Naive thymus-derived CD4-positive, alpha-beta T cell (primary cell): ENCODE measurements at regions of chr14 and their contacts with region 1.

Region 1: DNA sequence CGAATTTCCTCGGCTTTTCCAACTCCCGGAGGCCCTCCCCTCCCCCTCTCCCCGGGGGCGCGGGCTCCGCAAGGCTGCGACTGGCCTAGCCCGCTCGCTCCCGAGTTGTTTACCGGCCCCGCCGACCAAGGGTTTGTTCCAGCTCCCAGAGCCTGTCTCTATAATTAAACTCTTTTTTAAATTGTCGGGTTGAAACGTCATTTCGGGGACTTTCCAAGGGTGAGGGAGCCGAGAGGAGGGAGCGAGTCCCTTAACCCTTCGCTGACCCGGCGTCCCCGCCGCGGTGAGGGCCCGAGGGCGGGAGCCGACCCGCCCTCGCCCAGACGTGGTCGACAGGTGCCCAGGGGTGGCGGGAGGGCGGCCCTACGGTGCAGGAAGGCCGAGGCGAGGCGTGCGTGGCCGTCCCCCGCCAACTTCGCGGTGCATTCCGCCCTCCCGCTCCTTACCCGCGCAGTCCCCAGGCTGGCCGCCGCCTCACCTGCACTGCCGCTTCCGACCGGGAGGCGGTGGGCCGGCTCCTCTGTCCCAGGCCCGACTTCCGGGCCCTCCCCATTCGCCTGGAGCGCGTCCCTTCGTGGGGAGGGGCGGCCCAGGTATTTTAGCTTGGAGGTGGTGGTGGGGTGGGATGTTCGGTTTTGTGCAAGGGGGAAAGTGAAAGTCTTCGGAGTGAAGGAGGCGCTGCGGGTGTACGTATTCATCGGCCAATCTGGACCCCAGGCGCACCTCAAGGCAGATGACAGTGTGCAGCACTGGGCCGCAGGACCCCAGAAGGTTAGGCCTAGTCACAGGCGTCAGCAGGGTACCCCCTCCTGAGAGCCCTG is 2.9 kb upstream of the ZFP36L1 start:
- DNase-seq: peak; percentile 77 to 92 (median 86)
- ATAC-seq: peak; percentile 56
- H3K4me3 ChIP-seq: peak overlapping the region; percentile 91
- H3K4me3 Mint-ChIP-seq: peak overlapping the region; percentile 92 to 99 (median 95)
- H3K27ac ChIP-seq: peak overlapping the region; percentile 100
- H3K27ac Mint-ChIP-seq: peak overlapping the region; percentile 91 to 100 (median 98)
- H3K4me1 ChIP-seq: peaks cover 11 to 18% of the 10 kb centered on the region in 2 donors
- H3K4me1 Mint-ChIP-seq: peaks cover 9 to 37% (median 31%) of the 10 kb centered on the region in 7 donors
- H3K27me3 ChIP-seq: no peaks in the 10 kb centered on the region
- H3K27me3 Mint-ChIP-seq: peaks cover 0 to 4% (median 0%) of the 10 kb centered on the region in 5 donors

Region 2: DNA sequence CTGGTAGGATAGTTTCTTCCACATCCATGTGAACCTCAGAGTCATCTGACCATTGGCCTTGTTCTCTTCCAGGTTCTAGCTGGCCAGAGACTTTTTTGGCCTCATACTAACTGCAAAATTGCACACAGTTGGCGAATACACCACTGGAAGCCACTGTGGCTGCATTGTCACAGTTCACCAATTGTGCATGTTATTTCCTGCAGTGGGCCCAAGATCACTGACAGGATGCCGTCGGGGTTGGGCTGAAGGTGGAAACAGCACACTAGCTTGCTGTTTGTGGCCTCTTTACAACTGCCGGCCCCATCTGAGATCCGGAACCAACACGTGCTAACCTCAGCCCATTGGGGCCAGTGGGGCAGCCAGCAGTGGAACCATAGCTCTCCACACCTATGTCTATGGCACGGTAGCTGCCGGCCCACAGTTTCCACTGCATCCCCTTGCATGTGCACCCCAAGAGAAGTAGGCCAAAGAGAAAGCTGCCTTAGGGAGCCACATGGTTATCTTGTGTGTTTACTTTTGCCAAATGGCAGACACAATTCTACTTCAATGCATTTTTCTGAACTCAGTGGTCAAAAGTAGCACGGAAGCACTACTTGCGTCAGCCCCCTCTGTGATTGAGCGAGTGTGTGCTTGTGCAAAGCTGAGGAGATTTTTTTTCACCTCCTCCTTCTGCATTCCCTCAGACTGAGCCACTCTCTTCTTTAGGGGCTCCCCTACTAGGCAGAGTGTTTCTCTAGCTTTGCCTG is 512.3 kb before region 1 on chr14:
- CTCF ChIA-PET with region 1: interaction called, 26 read pairs
- POLR2A ChIA-PET with region 1: interaction called, 180 read pairs
- intact Hi-C with region 1: no loop called
- DNase-seq: peak; percentile 20 to 70 (median 62)
- ATAC-seq: peak; percentile 78
- H3K4me3 ChIP-seq: peak overlapping the region; percentile 14
- H3K4me3 Mint-ChIP-seq: peak overlapping the region; percentile 44 to 86 (median 72)
- H3K27ac ChIP-seq: peak overlapping the region; percentile 74
- H3K27ac Mint-ChIP-seq: peak overlapping the region; percentile 93 to 99 (median 97)
- H3K4me1 ChIP-seq: peaks cover 36 to 70% of the 10 kb centered on the region in 2 donors
- H3K4me1 Mint-ChIP-seq: peaks cover 44 to 96% (median 86%) of the 10 kb centered on the region in 7 donors
- H3K27me3 ChIP-seq: no peaks in the 10 kb centered on the region
- H3K27me3 Mint-ChIP-seq: no peaks in the 10 kb centered on the region

Region 3: DNA sequence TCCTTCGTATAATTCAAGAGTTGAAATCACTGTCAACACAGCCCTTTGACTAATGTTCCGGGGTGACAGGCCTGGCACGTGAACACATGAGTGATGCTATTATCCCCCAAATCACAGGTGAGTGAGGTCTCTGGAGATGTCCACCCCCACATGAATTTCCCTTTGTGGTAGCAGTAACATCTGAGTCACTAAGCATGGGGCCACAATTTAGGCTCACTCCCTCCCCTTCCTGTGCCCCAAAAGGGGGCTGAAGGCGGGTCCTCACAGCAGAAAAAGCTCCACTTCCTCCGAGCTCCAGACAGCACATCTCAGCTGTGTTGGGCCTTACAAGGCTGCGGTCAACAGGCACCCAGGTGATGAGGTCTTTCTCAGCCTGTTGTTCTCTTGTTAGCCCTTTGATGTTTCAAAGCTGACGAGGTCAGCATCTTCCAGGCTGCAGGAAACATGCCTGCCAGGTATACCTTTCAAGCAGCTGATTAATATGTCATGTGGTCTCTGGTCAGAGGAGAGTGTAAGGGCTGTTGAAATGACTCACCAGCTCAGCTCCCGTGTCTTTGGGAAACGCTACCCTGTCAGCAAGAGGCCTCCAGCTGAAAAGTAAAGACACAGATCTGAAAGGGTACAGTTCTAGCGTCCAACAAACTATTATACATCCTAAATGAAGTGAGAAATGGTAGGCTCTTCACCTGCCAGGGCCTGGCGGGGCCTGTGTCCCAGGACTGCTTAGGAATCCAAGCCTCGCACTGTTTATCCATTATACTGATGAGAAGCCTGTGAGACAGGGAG is 110.2 kb before region 1 on chr14:
- CTCF ChIA-PET with region 1: no interaction called
- POLR2A ChIA-PET with region 1: interaction called, 36 read pairs
- intact Hi-C with region 1: no loop called
- DNase-seq: peak; percentile 31 to 74 (median 64)
- ATAC-seq: peak; percentile 91
- H3K4me3 ChIP-seq: no peak overlapping the region
- H3K4me3 Mint-ChIP-seq: peak overlapping the region; percentile 3 to 74 (median 48)
- H3K27ac ChIP-seq: peak overlapping the region; percentile 25
- H3K27ac Mint-ChIP-seq: peak overlapping the region; percentile 74 to 97 (median 91)
- H3K4me1 ChIP-seq: peaks cover 44 to 53% of the 10 kb centered on the region in 2 donors
- H3K4me1 Mint-ChIP-seq: peaks cover 52 to 74% (median 59%) of the 10 kb centered on the region in 7 donors
- H3K27me3 ChIP-seq: no peaks in the 10 kb centered on the region
- H3K27me3 Mint-ChIP-seq: no peaks in the 10 kb centered on the region

Region 4: DNA sequence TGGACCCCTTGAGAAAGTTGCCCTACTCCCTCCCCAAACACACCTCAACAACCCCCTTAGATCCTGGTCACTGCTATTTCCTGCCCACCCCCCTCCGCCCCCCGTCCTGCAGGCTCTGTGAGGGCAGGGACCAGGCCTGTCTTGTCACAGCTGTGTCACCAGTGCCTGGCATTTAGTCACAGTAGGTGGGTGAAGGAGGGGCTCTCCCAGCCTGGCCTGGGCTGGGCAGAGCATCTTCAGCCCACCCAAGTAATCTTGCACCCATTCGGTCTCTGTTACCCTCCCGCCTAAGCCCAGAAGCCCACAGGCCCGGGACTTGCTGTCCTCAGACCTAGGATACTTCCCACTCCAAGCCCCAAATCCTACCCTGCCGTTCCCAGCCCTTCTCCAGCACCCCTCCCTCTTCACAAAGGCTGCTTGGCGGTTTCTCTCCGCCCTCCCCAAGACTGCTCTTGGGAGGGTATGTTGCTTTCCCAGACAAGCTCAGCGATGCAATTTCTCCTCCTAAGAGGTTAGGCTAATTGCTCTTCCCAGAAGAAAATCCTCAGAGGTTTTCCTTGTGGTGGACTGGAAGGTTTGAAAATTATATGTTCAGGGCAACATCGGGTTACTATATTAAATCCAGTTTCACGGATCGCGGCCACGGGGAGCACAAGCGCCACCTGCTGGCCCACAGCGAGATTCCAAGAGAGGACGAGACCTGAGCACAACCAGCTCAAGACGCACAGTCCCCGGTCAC is 47.8 kb after region 1 on chr14:
- CTCF ChIA-PET with region 1: interaction called, 4 read pairs
- POLR2A ChIA-PET with region 1: interaction called, 3 read pairs
- intact Hi-C with region 1: loop called in 1 of 2 experiments (anchors 1 kb)
- DNase-seq: peak; percentile 42 to 76 (median 68)
- ATAC-seq: peak; percentile 86
- H3K4me3 ChIP-seq: no peak overlapping the region
- H3K4me3 Mint-ChIP-seq: peak overlapping the region in 9 of 10 donors; percentile 30 to 62 (median 48)
- H3K27ac ChIP-seq: no peak overlapping the region
- H3K27ac Mint-ChIP-seq: peak overlapping the region in 3 of 9 donors; percentile 12 to 47 (median 29)
- H3K4me1 ChIP-seq: peaks cover 7 to 12% of the 10 kb centered on the region in 2 donors
- H3K4me1 Mint-ChIP-seq: peaks cover 12 to 34% (median 15%) of the 10 kb centered on the region in 7 donors
- H3K27me3 ChIP-seq: no peaks in the 10 kb centered on the region
- H3K27me3 Mint-ChIP-seq: peaks cover 0 to 9% (median 0%) of the 10 kb centered on the region in 5 donors

Region 5: GRCh38 chr14:69398053-69398817 is 602.4 kb after region 1 on chr14 and contains the starts of genes ERH and SLC39A9:
- CTCF ChIA-PET with region 1: no interaction called
- POLR2A ChIA-PET with region 1: no interaction called
- intact Hi-C with region 1: loop called in 1 of 2 experiments (anchors 2 kb)
- DNase-seq: peak; percentile 78 to 97 (median 94)
- ATAC-seq: peak; percentile 93
- H3K4me3 ChIP-seq: peak within 1 kb of the TSS; percentile 81
- H3K4me3 Mint-ChIP-seq: peak within 1 kb of the TSS; percentile 89 to 100 (median 97)
- H3K27ac ChIP-seq: peak within 1 kb of the TSS; percentile 86
- H3K27ac Mint-ChIP-seq: peak within 1 kb of the TSS; percentile 98 to 100 (median 100)
- H3K4me1 ChIP-seq: peaks cover 31 to 52% of the 10 kb centered on the region in 2 donors
- H3K4me1 Mint-ChIP-seq: peaks cover 39 to 93% (median 73%) of the 10 kb centered on the region in 7 donors
- H3K27me3 ChIP-seq: no peaks in the 10 kb centered on the region
- H3K27me3 Mint-ChIP-seq: no peaks in the 10 kb centered on the region
- total RNA-seq, gene ERH: 85.1 to 330 (median 96.3) TPM
- total RNA-seq, gene SLC39A9: 27.2 to 50.3 (median 35.3) TPM

Region 6: DNA sequence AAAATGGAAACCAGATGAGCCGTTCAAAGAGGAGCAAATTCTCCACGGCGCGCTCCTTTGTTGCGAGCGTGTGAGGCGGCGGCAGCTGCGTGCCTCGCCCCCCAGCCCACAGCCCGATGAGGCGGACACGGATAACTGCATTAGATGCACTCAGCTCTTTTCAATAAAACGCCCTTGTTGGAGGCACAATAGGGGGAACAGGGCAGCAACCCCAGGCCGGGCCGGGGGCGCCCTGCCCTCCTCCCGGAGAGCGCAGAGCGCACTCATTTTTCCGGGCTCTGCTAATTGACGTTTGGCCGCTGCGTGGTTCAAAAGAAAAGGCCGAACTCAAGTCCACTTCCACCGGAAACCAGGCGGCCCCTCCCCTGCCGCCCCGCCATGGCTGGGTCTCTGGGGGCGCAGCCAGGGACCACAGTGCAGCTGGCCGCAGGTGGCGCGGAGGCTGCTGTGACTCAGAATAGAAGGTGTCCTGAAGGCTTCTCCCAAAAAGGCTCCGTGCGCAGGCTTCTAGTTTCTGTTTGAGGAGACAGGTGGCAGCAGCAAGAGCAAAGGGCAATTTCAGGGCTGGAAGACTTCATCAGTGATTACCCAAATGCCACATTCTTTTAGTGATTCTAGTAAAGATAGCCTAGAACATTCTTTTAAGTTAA is 1054.4 kb after region 1 on chr14:
- CTCF ChIA-PET with region 1: no interaction called
- POLR2A ChIA-PET with region 1: no interaction called
- intact Hi-C with region 1: no loop called
- DNase-seq: no peak
- ATAC-seq: no peak
- H3K4me3 ChIP-seq: no peak overlapping the region
- H3K4me3 Mint-ChIP-seq: no peak overlapping the region
- H3K27ac ChIP-seq: no peak overlapping the region
- H3K27ac Mint-ChIP-seq: no peak overlapping the region
- H3K4me1 ChIP-seq: no peaks in the 10 kb centered on the region
- H3K4me1 Mint-ChIP-seq: no peaks in the 10 kb centered on the region
- H3K27me3 ChIP-seq: no peaks in the 10 kb centered on the region
- H3K27me3 Mint-ChIP-seq: peaks cover 0 to 14% (median 12%) of the 10 kb centered on the region in 5 donors

Region 7: DNA sequence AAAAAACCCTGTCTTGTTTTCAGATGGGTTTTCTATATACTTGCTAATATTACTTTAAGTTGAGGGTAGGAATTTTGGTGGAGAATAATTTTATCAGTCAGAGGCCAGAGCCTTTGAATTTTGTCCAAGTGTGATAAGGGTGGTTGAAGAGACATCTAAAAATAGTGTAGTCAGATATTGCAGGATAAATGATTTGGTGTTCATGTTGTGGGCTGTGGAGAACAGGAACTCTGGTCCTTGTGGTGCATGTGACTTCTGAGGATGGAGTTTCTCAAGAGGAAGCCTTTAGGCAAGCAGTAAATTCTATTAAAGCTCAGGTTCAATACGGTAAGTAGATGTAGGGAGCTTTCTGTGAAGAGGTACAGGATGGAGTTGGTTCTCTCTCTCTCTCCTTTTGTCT is 1658.9 kb after region 1 on chr14:
- CTCF ChIA-PET with region 1: no interaction called
- POLR2A ChIA-PET with region 1: no interaction called
- intact Hi-C with region 1: no loop called
- DNase-seq: no peak
- ATAC-seq: no peak
- H3K4me3 ChIP-seq: no peak overlapping the region
- H3K4me3 Mint-ChIP-seq: no peak overlapping the region
- H3K27ac ChIP-seq: no peak overlapping the region
- H3K27ac Mint-ChIP-seq: no peak overlapping the region
- H3K4me1 ChIP-seq: no peaks in the 10 kb centered on the region
- H3K4me1 Mint-ChIP-seq: no peaks in the 10 kb centered on the region
- H3K27me3 ChIP-seq: no peaks in the 10 kb centered on the region
- H3K27me3 Mint-ChIP-seq: peaks cover 0 to 13% (median 5%) of the 10 kb centered on the region in 5 donors